Activated CD4-positive, alpha-beta memory T cell treated with anti-CD3 and anti-CD28 coated beads, Interleukin-2, amount 10 ng/mL, durations not matched to agents 7 days and 5 days (primary cell): ENCODE measurements at regions of chr12 and their contacts with region 1.

Region 1: DNA sequence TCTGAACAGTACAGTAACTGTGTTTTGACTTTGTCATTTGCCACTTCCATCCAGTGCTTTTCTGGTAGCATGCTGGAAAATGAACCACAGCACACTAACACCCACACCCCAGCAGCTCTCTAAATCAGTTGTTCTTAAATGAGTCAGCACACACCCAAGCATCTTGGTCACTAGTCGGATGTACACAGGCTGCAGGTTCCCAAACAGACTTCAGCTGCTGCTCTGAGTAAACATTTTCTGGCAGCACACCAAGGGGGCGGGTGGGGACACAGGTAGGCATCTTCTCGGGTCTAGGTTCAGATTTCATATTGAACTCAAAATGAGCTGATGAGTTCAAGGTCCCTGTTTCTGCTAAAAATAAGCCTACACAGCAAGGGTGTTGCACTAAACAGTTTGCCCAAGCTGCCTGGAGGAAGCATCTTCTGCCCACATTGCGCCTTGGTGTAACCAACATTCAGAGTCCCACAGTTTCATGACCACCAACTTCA is 39.8 kb downstream of the IFNG start:
- DNase-seq: peak; percentile 78
- H3K4me3 Mint-ChIP-seq: peak overlapping the region; percentile 28
- H3K27ac Mint-ChIP-seq: no peak overlapping the region
- H3K4me1 Mint-ChIP-seq: peaks cover 31% of the 10 kb centered on the region
- H3K27me3 Mint-ChIP-seq: no peaks in the 10 kb centered on the region

Region 2: GRCh38 chr12:67952787-67953186 is 167.0 kb before region 1 on chr12:
- CTCF ChIA-PET with region 1: no interaction called
- POLR2A ChIA-PET with region 1: no interaction called
- DNase-seq: no peak
- H3K4me3 Mint-ChIP-seq: no peak overlapping the region
- H3K27ac Mint-ChIP-seq: no peak overlapping the region
- H3K4me1 Mint-ChIP-seq: no peaks in the 10 kb centered on the region
- H3K27me3 Mint-ChIP-seq: no peaks in the 10 kb centered on the region

Region 3: GRCh38 chr12:68040450-68041075 is 79.2 kb before region 1 on chr12:
- CTCF ChIA-PET with region 1: interaction called, 14 read pairs
- POLR2A ChIA-PET with region 1: interaction called, 4 read pairs
- DNase-seq: peak; percentile 70
- H3K4me3 Mint-ChIP-seq: no peak overlapping the region
- H3K27ac Mint-ChIP-seq: peak overlapping the region; percentile 11
- H3K4me1 Mint-ChIP-seq: peaks cover 36% of the 10 kb centered on the region
- H3K27me3 Mint-ChIP-seq: no peaks in the 10 kb centered on the region

Region 4: DNA sequence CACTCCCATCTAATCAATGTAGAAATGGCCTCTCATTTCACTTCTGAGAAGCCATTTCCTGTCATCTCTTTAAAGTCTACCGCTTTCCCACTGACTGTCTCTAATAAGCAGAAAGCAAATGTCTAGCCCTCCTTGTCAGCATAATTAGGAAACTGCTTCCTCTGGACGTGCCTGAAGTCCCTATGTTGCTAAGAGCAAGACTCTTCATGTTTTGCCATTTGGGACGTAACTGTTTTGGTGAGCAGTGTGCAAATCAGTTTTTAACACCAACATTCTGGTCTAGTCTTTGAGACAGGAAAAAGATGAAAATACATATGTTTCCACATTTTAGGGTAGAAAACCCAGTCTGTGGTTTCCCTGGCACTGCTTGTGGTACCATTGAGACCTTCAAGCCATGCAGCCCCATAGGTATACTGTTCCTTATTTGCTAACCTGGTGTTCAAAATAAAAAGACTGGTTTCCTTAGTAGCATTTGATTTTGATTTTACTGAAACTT is 17.6 kb after region 1 on chr12:
- CTCF ChIA-PET with region 1: interaction called, 4 read pairs
- POLR2A ChIA-PET with region 1: interaction called, 59 read pairs
- DNase-seq: no peak
- H3K4me3 Mint-ChIP-seq: peak overlapping the region; percentile 0
- H3K27ac Mint-ChIP-seq: peak overlapping the region; percentile 78
- H3K4me1 Mint-ChIP-seq: peaks cover 50% of the 10 kb centered on the region
- H3K27me3 Mint-ChIP-seq: no peaks in the 10 kb centered on the region

Region 5: DNA sequence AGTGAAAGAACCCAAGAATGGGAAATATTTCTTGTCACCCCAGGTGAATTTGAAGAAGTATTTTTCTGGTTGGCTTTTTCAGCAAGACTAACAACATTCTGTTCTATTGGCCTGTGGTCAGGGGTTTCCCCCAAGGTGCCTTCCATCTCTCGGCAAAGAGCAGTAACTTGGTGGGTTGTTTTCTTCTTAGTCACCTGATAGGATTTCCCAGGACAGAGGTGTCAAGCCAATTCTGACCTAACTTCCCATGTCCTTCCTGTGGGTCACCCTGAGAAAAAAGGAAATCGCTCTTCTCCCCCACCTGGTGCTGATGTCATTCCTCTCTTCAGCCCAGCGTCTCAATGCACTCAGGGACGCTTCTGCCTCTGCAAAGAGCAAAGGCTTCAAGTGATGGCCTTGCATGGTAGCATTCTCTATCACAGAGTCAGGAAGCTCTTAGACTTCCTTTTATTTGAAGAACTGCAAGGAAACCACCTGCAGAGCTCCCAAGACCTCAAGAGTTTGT is 55.8 kb after region 1 on chr12:
- CTCF ChIA-PET with region 1: interaction called, 4 read pairs
- POLR2A ChIA-PET with region 1: interaction called, 14 read pairs
- DNase-seq: peak; percentile 67
- H3K4me3 Mint-ChIP-seq: peak overlapping the region; percentile 19
- H3K27ac Mint-ChIP-seq: peak overlapping the region; percentile 42
- H3K4me1 Mint-ChIP-seq: peaks cover 54% of the 10 kb centered on the region
- H3K27me3 Mint-ChIP-seq: no peaks in the 10 kb centered on the region

Region 6: DNA sequence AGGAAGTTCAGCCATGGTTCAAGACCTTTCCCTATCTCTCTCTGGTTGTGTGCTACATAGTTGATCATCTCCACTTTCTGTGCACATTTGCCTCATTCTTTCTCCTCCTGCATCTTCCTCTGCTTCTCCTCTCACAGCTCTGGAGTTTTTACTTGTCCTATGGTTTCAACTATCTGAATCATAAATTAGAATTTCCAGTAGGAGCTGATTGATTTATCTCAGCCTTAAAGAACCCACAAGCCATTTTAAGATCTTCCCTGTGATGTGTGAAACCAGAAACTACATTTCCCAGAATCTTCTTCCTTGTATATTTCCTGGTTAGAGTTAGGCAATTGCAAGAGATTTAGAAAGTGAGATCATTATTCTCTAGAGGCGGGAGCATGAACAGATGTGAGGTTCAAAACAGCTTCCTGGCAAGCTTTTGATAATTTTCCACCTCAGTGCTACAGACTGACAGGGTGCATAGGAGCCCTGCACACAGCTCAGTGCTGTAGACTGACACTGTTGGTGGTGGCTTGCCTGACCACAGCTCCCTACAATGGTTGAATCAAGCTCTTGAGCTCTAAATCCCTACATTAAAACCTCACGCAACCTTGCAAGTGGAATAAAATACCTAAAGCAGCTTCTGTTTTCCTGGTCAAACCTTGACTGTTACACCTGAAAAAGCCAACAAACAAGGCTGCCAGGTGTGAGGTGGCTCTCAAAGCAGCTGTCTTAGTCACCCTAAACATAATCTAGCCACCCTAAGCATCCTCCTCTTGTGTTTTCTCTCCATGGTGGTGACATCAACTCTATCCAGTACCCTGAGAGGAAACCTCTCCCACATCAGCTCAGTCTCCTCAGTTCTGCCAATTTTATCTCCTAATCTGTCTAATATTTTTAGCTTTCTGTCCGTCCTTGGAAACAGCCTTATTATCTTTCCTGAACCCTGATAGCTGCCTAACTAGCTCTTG is 61.3 kb after region 1 on chr12:
- CTCF ChIA-PET with region 1: interaction called, 4 read pairs
- POLR2A ChIA-PET with region 1: interaction called, 14 read pairs
- DNase-seq: peak; percentile 59
- H3K4me3 Mint-ChIP-seq: no peak overlapping the region
- H3K27ac Mint-ChIP-seq: peak overlapping the region; percentile 74
- H3K4me1 Mint-ChIP-seq: peaks cover 50% of the 10 kb centered on the region
- H3K27me3 Mint-ChIP-seq: peaks cover 9% of the 10 kb centered on the region